CD4-positive, alpha-beta memory T cell (primary cell): ENCODE measurements at regions of chr17 and their contacts with region 1.

Region 1: DNA sequence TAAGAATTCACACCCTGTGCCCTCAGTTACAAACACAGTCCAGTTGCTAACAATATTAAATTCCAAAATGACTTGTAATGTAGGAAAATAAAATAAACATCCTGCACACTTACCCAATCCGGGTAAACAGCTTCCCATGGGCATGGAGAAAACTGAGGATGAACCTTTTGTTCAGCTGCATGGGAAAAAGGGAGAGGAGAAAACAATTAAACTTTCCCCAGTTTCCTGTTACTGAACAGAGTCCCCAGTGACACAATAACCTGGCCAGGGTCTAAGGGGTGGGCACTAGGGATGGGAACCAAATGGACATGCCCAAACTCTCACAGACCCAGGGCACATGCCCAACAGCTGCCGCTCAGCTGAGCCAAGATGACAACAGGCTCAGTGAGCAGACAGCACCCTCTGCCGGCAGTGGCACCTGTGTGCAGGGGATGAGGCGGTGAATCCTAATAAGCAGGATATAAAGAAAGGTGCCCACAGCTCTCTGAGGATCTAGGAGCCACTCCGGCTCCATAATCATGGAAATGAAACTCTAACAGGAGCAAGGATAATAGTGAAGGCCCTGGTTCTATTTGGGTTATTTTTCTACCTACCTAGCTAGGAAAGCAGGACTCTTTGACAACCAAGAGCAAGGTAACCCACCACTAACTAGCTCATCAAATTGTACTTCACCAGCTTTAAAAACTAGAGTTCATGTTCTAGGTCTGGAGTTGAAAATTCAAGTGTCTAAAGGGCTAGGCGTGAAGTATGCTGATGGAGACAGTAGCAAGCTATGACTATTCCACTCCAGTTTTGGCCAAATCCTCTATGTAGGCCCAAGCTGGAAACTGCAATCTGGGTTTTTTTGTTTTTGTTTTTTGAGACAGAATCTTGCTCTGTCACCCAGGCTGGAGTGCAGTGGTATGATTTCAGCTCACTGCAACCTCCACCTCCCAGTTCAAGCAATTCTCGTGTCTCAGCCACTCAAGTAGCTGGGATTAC is 58.8 kb downstream of the SMG6 start:
- DNase-seq: peak; percentile 73 to 79 (median 76)
- H3K4me3 ChIP-seq: no peak overlapping the region
- H3K4me3 Mint-ChIP-seq: no peak overlapping the region
- H3K27ac ChIP-seq: no peak overlapping the region
- H3K27ac Mint-ChIP-seq: peak overlapping the region; percentile 48 to 93 (median 82)
- H3K4me1 ChIP-seq: no peaks in the 10 kb centered on the region
- H3K4me1 Mint-ChIP-seq: peaks cover 15 to 38% (median 23%) of the 10 kb centered on the region in 4 donors
- H3K27me3 ChIP-seq: no peaks in the 10 kb centered on the region
- H3K27me3 Mint-ChIP-seq: no peaks in the 10 kb centered on the region

Region 2: GRCh38 chr17:1882836-1883235 is 362.0 kb before region 1 on chr17:
- CTCF ChIA-PET with region 1: interaction called, 16 read pairs
- POLR2A ChIA-PET with region 1: no interaction called
- intact Hi-C with region 1: no loop called
- DNase-seq: peak in 2 of 5 donors; percentile 26 to 28
- H3K4me3 ChIP-seq: no peak overlapping the region
- H3K4me3 Mint-ChIP-seq: no peak overlapping the region
- H3K27ac ChIP-seq: no peak overlapping the region
- H3K27ac Mint-ChIP-seq: no peak overlapping the region
- H3K4me1 ChIP-seq: no peaks in the 10 kb centered on the region
- H3K4me1 Mint-ChIP-seq: peaks cover 0 to 4% (median 2%) of the 10 kb centered on the region in 4 donors
- H3K27me3 ChIP-seq: no peaks in the 10 kb centered on the region
- H3K27me3 Mint-ChIP-seq: no peaks in the 10 kb centered on the region

Region 3: DNA sequence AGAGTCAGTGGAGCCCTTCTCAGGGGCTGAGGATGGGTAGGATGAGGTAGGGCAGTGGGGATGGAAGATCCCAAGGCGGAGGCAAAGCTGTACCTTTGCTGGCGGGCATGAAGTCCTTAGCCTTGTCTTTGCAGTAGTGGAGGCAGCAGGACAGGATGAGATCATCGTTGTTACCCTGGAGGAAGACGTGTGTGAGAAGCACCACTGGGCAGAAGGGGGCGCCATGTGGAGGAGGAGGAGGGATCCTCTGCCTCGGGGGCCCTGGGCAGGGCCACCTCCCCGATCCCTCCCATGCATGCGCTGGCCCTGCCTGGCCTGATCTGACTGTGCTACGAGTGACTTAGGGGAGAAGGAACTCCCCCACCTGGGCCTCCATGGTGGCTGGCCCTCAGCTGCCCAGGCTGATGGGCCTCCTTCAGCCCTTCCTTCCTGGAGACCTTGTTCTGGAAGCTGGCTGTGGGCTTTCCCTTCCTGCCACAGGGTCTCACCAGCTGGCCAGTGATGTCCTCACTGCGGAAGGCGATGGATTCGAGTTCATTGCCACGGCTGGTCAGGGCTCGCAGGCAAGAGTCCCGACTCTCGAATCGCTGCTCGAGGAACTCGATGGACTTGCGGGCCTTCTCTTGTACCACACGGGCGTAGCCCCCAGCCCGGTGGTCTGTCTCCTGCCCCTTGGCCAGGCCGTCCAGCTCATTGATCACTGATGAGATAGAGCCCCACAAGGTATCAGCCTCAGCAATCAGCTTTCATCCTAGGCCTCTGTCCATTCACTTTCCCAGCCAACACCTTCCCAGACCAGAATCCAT is 179.7 kb before region 1 on chr17:
- CTCF ChIA-PET with region 1: interaction called, 192 read pairs
- POLR2A ChIA-PET with region 1: no interaction called
- intact Hi-C with region 1: no loop called
- DNase-seq: peak in 3 of 5 donors; percentile 38 to 61 (median 42)
- H3K4me3 ChIP-seq: no peak overlapping the region
- H3K4me3 Mint-ChIP-seq: no peak overlapping the region
- H3K27ac ChIP-seq: no peak overlapping the region
- H3K27ac Mint-ChIP-seq: peak overlapping the region; percentile 19 to 93 (median 77)
- H3K4me1 ChIP-seq: peaks cover 17% of the 10 kb centered on the region
- H3K4me1 Mint-ChIP-seq: peaks cover 8 to 15% (median 12%) of the 10 kb centered on the region in 4 donors
- H3K27me3 ChIP-seq: no peaks in the 10 kb centered on the region
- H3K27me3 Mint-ChIP-seq: no peaks in the 10 kb centered on the region

Region 4: DNA sequence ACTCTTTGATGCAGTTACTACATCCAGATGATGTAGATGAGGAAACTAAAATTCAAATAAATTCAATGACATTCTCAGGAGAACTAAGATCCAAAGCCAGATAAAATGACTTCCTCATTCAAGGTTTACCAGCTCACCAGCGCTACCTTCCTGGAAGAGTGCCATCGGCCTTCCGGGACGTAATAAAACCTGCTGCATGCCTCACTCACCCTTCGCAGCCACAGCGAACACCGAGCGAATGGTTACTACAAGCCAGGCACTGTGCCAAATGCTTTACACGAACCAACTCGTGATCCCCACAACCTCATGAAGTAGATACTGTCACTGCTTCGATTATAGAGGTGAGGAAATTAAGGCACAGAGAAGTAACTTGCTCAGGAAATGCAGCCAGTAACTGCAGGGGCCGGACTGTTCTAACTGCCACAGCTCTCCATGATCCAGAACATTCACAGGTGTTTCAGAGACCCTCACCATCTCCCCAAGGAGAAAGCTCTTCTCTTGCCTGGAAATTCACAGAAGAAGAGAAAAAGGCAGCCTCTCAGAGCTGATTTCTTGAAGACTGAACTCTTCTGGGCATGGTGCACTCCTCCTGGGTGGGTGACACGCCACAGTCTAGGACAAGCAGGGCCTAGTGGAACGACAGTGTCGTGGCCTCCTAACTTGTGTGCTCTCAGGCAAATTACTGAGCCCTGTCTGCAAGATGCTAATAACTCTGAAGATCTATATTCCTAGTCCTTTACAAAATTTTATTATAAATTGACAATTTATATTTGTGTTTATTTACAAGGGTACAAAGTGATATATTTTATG is 143.2 kb before region 1 on chr17:
- CTCF ChIA-PET with region 1: interaction called, 18 read pairs
- POLR2A ChIA-PET with region 1: no interaction called
- intact Hi-C with region 1: no loop called
- DNase-seq: peak; percentile 42 to 68 (median 47)
- H3K4me3 ChIP-seq: no peak overlapping the region
- H3K4me3 Mint-ChIP-seq: peak overlapping the region in 1 of 8 donors; percentile 15
- H3K27ac ChIP-seq: no peak overlapping the region
- H3K27ac Mint-ChIP-seq: peak overlapping the region; percentile 37 to 85 (median 55)
- H3K4me1 ChIP-seq: peaks cover 6% of the 10 kb centered on the region
- H3K4me1 Mint-ChIP-seq: peaks cover 7 to 17% (median 13%) of the 10 kb centered on the region in 4 donors
- H3K27me3 ChIP-seq: no peaks in the 10 kb centered on the region
- H3K27me3 Mint-ChIP-seq: no peaks in the 10 kb centered on the region

Region 5: DNA sequence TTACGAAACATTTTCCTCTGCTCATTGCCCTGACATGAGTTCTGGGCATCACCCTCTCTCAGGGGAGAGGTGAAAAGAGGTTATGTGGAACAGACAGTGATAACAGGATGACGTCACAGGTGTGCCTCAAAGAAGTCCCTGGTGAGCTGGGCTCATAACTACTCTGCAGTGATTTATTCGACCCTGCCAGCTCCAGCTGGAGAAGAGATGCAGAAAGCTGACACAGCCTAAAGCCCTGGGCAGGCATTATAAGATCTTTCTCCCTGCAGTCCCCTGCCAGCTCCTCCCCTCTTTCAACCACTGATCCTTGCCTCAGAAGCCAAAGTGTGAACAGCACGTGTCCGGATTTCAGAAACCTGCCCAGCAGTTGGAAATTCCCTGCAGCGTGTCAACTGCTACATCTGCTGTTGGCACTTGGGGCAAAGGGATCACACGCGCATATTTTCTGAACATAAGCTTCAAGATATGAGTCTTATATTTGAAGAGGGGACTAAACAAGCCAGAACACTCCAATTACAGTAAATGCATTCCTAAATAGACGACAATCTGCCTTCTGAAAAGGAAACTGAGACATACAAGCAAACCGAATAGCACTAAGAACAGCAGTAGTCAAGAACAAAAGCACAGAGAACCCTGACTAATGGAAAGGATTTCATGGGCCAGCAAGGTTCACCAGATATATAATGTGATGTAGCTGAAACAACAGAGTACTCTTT is 21.8 kb before region 1 on chr17:
- CTCF ChIA-PET with region 1: interaction called, 13 read pairs
- POLR2A ChIA-PET with region 1: interaction called, 6 read pairs
- intact Hi-C with region 1: no loop called
- DNase-seq: peak; percentile 67 to 89 (median 67)
- H3K4me3 ChIP-seq: no peak overlapping the region
- H3K4me3 Mint-ChIP-seq: peak overlapping the region; percentile 18 to 71 (median 62)
- H3K27ac ChIP-seq: peak overlapping the region; percentile 56
- H3K27ac Mint-ChIP-seq: peak overlapping the region; percentile 79 to 95 (median 90)
- H3K4me1 ChIP-seq: peaks cover 20% of the 10 kb centered on the region
- H3K4me1 Mint-ChIP-seq: peaks cover 28 to 42% (median 32%) of the 10 kb centered on the region in 4 donors
- H3K27me3 ChIP-seq: no peaks in the 10 kb centered on the region
- H3K27me3 Mint-ChIP-seq: no peaks in the 10 kb centered on the region

Region 6: GRCh38 chr17:2266045-2266864 is 21.4 kb after region 1 on chr17:
- CTCF ChIA-PET with region 1: interaction called, 60 read pairs
- POLR2A ChIA-PET with region 1: interaction called, 72 read pairs
- intact Hi-C with region 1: loop called (anchors 1 kb)
- DNase-seq: peak; percentile 90 to 97 (median 91)
- H3K4me3 ChIP-seq: peak overlapping the region; percentile 13 to 26
- H3K4me3 Mint-ChIP-seq: peak overlapping the region; percentile 72 to 86 (median 85)
- H3K27ac ChIP-seq: peak overlapping the region; percentile 87
- H3K27ac Mint-ChIP-seq: peak overlapping the region; percentile 98 to 99 (median 99)
- H3K4me1 ChIP-seq: peaks cover 82% of the 10 kb centered on the region
- H3K4me1 Mint-ChIP-seq: peaks cover 52 to 86% (median 73%) of the 10 kb centered on the region in 4 donors
- H3K27me3 ChIP-seq: no peaks in the 10 kb centered on the region
- H3K27me3 Mint-ChIP-seq: no peaks in the 10 kb centered on the region